ENCODE measurements at regions of chr15 and their contacts with region 1.

Region 1: DNA sequence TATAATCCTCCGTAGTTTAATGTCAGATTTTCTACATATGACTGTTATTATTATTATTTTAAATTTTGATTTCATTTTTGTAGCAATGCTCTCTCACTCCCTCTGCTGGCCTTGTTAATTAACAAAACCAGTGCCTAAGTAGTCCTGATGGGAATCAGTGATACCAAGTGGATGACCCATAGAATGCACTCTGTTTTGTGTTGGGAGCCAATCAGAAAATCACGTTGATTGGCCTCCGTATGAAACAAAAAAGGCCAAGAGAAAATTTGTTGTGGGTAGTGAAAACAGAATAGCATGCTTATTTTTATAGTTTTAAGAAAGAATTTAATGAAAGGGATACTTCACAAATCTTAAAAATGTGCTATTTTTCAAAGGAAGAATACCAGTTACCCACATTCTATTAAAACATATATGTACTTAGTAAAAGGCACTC is 34.4 kb upstream of the MEIS2 start:
- DNase-seq: no peak
- H3K4me3 ChIP-seq: no peak overlapping the region
- H3K27ac ChIP-seq: peak overlapping the region in 1 of 4 donors; percentile 51
- H3K4me1 ChIP-seq: peaks cover 0 to 20% (median 17%) of the 10 kb centered on the region in 4 donors
- H3K27me3 ChIP-seq: no peaks in the 10 kb centered on the region
- CTCF ChIP-seq: peak; percentile 66 to 75 (median 66)
- EP300 ChIP-seq: no peak
- POLR2A ChIP-seq: no peak

Region 2: GRCh38 chr15:36501063-36501678 is 633.5 kb before region 1 on chr15:
- intact Hi-C with region 1: loop called (anchors 5 kb)
- DNase-seq: no peak
- H3K4me3 ChIP-seq: no peak overlapping the region
- H3K27ac ChIP-seq: peak overlapping the region in 1 of 4 donors; percentile 16
- H3K4me1 ChIP-seq: peaks cover 8 to 36% (median 25%) of the 10 kb centered on the region in 4 donors
- H3K27me3 ChIP-seq: no peaks in the 10 kb centered on the region
- CTCF ChIP-seq: peak; percentile 70 to 75 (median 72)
- EP300 ChIP-seq: no peak
- POLR2A ChIP-seq: no peak

Region 3: GRCh38 chr15:36666228-36666905 is 468.3 kb before region 1 on chr15:
- intact Hi-C with region 1: loop called (anchors 5 kb)
- DNase-seq: no peak
- H3K4me3 ChIP-seq: no peak overlapping the region
- H3K27ac ChIP-seq: no peak overlapping the region
- H3K4me1 ChIP-seq: peaks cover 4 to 14% (median 4%) of the 10 kb centered on the region in 4 donors
- H3K27me3 ChIP-seq: no peaks in the 10 kb centered on the region
- CTCF ChIP-seq: no peak
- EP300 ChIP-seq: no peak
- POLR2A ChIP-seq: no peak

Region 4: DNA sequence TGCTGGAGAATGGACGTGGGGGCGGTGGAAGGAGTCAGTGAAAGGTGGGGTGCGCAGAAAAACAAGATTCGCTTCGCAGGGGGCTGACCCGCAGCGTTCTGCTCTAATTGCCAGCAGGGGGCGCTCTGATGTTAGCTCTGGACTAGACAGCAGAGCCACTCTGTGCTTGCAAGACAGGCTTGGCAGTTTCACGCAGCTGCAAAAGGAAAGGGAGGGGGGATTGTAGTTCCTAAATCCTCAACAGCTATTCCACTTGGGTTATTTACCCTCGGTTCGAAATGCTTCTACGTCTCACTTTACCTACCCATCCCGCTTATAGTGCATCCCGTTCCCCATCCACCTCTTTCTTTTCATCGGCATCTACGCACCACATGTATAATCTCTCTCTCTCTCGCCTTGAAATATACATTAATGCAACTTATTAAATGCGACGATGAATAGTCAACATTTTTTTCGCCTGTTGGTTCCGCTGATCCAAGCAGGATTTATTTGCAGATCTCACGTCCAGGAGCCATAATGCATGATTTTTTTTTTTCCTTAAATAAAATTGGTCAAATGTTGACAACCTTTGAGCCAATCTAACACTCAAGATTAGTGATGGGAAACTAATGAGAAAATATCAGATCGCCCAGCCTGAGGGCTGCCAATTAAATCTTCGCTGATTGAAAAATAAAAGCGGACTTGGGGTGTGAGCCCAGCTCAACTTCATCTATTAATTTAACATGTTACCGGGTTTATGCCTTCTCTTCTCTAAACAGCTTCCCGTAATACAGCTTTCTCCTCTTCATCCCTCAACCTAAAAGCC is 250.8 kb before region 1 on chr15:
- intact Hi-C with region 1: loop called (anchors 2 kb)
- DNase-seq: no peak
- H3K4me3 ChIP-seq: peak overlapping the region; percentile 41 to 49 (median 48)
- H3K27ac ChIP-seq: peak overlapping the region; percentile 42 to 71 (median 58)
- H3K4me1 ChIP-seq: peaks cover 7 to 58% (median 49%) of the 10 kb centered on the region in 4 donors
- H3K27me3 ChIP-seq: peaks cover 0 to 27% (median 10%) of the 10 kb centered on the region in 4 donors
- CTCF ChIP-seq: peak; percentile 85 to 92 (median 85)
- EP300 ChIP-seq: no peak
- POLR2A ChIP-seq: no peak